ENCODE measurements at regions of chr17 and their contacts with region 1.

Region 1: DNA sequence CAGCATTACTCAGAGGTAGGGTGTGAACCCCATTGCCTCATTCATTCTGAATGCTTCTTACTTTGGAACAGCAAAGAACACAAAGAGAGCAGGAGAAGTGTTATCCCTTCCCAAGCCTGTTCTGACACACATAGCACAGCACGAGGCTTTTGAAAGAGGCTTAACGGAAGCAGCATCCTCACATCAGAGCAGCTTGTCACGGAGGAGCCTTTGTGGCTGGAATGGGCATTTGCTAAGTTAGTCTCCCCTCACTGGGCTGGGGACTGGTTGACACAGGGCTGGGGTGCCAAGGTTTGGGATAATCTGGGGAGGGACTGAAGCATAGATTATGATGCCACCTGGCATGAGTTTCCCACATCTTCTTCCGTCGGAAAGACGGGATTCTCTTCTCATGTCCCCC is 167.5 kb upstream of the DNAH9 start:
- DNase-seq: no peak
- ATAC-seq: no peak
- H3K4me3 Mint-ChIP-seq: no peak overlapping the region
- H3K27ac Mint-ChIP-seq: no peak overlapping the region
- H3K4me1 Mint-ChIP-seq: no peaks in the 10 kb centered on the region
- H3K27me3 Mint-ChIP-seq: no peaks in the 10 kb centered on the region

Region 2: GRCh38 chr17:11047228-11047627 is 383.5 kb before region 1 on chr17:
- CTCF ChIA-PET with region 1: no interaction called
- POLR2A ChIA-PET with region 1: no interaction called
- intact Hi-C with region 1: no loop called
- DNase-seq: no peak
- ATAC-seq: no peak
- H3K4me3 Mint-ChIP-seq: no peak overlapping the region
- H3K27ac Mint-ChIP-seq: no peak overlapping the region
- H3K4me1 Mint-ChIP-seq: no peaks in the 10 kb centered on the region
- H3K27me3 Mint-ChIP-seq: no peaks in the 10 kb centered on the region

Region 3: GRCh38 chr17:11388054-11388453 is 42.7 kb before region 1 on chr17:
- CTCF ChIA-PET with region 1: no interaction called
- POLR2A ChIA-PET with region 1: no interaction called
- intact Hi-C with region 1: loop called in 1 of 2 experiments (anchors 10 kb)
- DNase-seq: no peak
- ATAC-seq: no peak
- H3K4me3 Mint-ChIP-seq: no peak overlapping the region
- H3K27ac Mint-ChIP-seq: no peak overlapping the region
- H3K4me1 Mint-ChIP-seq: no peaks in the 10 kb centered on the region
- H3K27me3 Mint-ChIP-seq: no peaks in the 10 kb centered on the region

Region 4: GRCh38 chr17:11459861-11460331 is 29.1 kb after region 1 on chr17:
- CTCF ChIA-PET with region 1: no interaction called
- POLR2A ChIA-PET with region 1: no interaction called
- intact Hi-C with region 1: no loop called
- DNase-seq: no peak
- ATAC-seq: no peak
- H3K4me3 Mint-ChIP-seq: no peak overlapping the region
- H3K27ac Mint-ChIP-seq: no peak overlapping the region
- H3K4me1 Mint-ChIP-seq: no peaks in the 10 kb centered on the region
- H3K27me3 Mint-ChIP-seq: no peaks in the 10 kb centered on the region

Region 5: DNA sequence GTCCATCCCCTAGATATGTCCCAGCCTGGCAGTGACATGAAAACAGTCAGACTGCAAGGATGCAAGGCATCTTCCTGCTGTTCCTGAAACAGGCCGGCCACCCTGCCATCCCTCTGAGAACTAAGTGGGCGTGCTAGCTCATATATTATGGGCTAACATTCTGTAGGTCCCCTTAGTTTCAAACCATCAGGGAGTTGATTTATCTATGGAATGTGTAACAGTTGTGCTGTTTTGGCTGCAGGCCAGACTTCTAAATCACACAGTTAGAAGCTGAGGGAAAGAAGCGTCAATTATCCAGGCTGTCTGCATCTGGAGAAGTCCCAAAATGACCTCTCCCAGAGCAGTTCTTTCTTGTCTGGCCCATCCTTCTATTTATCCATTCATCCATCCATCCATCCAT is 64.9 kb after region 1 on chr17:
- CTCF ChIA-PET with region 1: no interaction called
- POLR2A ChIA-PET with region 1: no interaction called
- intact Hi-C with region 1: loop called in 1 of 2 experiments (anchors 10 kb)
- DNase-seq: no peak
- ATAC-seq: no peak
- H3K4me3 Mint-ChIP-seq: no peak overlapping the region
- H3K27ac Mint-ChIP-seq: no peak overlapping the region
- H3K4me1 Mint-ChIP-seq: no peaks in the 10 kb centered on the region
- H3K27me3 Mint-ChIP-seq: no peaks in the 10 kb centered on the region

Region 6: GRCh38 chr17:12794919-12795532 is 1364.3 kb after region 1 on chr17:
- CTCF ChIA-PET with region 1: no interaction called
- POLR2A ChIA-PET with region 1: no interaction called
- intact Hi-C with region 1: no loop called
- DNase-seq: no peak
- ATAC-seq: no peak
- H3K4me3 Mint-ChIP-seq: no peak overlapping the region
- H3K27ac Mint-ChIP-seq: no peak overlapping the region
- H3K4me1 Mint-ChIP-seq: peaks cover 4% of the 10 kb centered on the region
- H3K27me3 Mint-ChIP-seq: peaks cover 23% of the 10 kb centered on the region

Measured in activated CD4-positive, alpha-beta T cell treated with anti-CD3 and anti-CD28 coated beads for 36 hours (primary cell).